ENCODE measurements at regions of chr16 and their contacts with region 1.

Region 1: GRCh38 chr16:6643080-6643686 is 689.5 kb upstream of the RBFOX1 start:
- DNase-seq: peak; percentile 76
- H3K4me3 ChIP-seq: no peak overlapping the region
- H3K27ac ChIP-seq: no peak overlapping the region
- H3K4me1 ChIP-seq: no peaks in the 10 kb centered on the region
- H3K27me3 ChIP-seq: peaks cover 31% of the 10 kb centered on the region
- CTCF ChIP-seq: peak; percentile 86

Region 2: GRCh38 chr16:5615868-5616642 is 1027.1 kb before region 1 on chr16:
- CTCF ChIA-PET with region 1: no interaction called
- POLR2A ChIA-PET with region 1: no interaction called
- intact Hi-C with region 1: loop called (anchors 10 kb)
- DNase-seq: peak; percentile 77
- H3K4me3 ChIP-seq: no peak overlapping the region
- H3K27ac ChIP-seq: no peak overlapping the region
- H3K4me1 ChIP-seq: no peaks in the 10 kb centered on the region
- H3K27me3 ChIP-seq: no peaks in the 10 kb centered on the region
- CTCF ChIP-seq: peak; percentile 87

Region 3: DNA sequence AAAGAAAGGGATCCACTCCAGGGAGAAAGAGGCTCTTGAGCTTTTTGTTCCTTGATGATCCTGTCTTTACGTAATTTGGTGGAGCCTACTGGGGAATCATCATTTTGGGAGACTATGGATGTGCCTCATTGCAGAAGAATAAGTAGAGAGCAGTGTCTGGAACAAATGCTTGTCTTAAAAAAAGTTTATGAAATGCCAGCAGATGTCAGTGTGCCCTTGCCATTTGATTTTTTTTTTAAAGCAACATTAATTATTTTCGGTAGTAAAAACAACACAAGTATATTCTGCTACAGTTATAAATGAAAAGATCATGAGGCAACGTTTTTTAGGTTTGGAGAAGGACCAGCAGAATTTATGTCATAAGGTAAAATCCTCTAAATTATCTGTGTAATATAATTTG is 610.7 kb before region 1 on chr16:
- CTCF ChIA-PET with region 1: no interaction called
- POLR2A ChIA-PET with region 1: no interaction called
- intact Hi-C with region 1: loop called (anchors 5 kb)
- DNase-seq: no peak
- H3K4me3 ChIP-seq: no peak overlapping the region
- H3K27ac ChIP-seq: no peak overlapping the region
- H3K4me1 ChIP-seq: no peaks in the 10 kb centered on the region
- H3K27me3 ChIP-seq: no peaks in the 10 kb centered on the region
- CTCF ChIP-seq: peak; percentile 30; the same call in 1 of the 2 replicates

Region 4: GRCh38 chr16:7083096-7083495 is 439.9 kb after region 1 on chr16:
- CTCF ChIA-PET with region 1: no interaction called
- POLR2A ChIA-PET with region 1: no interaction called
- intact Hi-C with region 1: no loop called
- DNase-seq: no peak
- H3K4me3 ChIP-seq: no peak overlapping the region
- H3K27ac ChIP-seq: no peak overlapping the region
- H3K4me1 ChIP-seq: no peaks in the 10 kb centered on the region
- H3K27me3 ChIP-seq: peaks cover 4% of the 10 kb centered on the region
- CTCF ChIP-seq: no peak